ENCODE measurements at regions of chr5 and their contacts with region 1.

Region 1: GRCh38 chr5:138542956-138543729 is at the start of gene ETF1:
- DNase-seq: peak; percentile 99 to 100
- ATAC-seq: peak; percentile 86 to 97 (median 87)
- H3K4me3 ChIP-seq: peak within 1 kb of the TSS; percentile 98
- H3K4me3 Mint-ChIP-seq: peak within 1 kb of the TSS; percentile 100
- H3K27ac ChIP-seq: peak within 1 kb of the TSS; percentile 98
- H3K27ac Mint-ChIP-seq: peak within 1 kb of the TSS; percentile 98 to 100
- H3K4me1 ChIP-seq: peaks cover 32% of the 10 kb centered on the region
- H3K4me1 Mint-ChIP-seq: peaks cover 71 to 72% of the 10 kb centered on the region in 2 donors
- H3K27me3 ChIP-seq: no peaks in the 10 kb centered on the region
- H3K27me3 Mint-ChIP-seq: no peaks in the 10 kb centered on the region
- CTCF ChIP-seq: no peak
- total RNA-seq, gene ETF1: 135 to 189 (median 136) TPM

Region 2: DNA sequence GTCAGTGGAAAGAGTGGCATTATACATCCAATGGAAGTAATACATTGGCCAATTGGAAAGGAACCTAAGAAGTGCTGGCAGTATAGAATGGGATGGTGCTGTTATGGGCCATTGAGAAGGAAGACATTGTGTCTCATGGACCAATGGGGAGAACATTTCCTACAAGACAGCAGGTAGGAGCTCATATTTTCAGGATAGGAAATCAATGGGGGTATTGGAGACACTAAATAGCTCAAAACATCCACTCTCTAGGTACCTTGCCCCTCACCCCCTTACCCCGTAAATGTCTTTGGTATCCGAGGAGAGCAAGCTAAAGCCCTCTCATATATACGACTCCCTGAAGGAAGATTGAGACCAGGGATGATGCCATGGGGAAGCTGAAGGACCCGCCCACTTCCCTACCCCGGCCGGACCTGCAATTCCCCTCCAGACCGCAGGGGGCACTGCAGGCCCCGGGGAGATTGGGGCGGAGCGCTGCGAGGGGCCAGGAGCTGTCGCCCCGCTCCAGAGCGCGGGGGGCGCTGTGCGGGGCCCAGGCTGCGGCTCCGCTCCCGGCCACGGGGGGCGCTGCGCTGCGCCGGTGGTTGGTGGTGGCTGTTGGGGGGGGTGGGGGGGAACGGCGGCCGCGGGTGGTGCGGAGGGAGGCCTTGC is 190.9 kb before region 1 on chr5 and contains the start of gene KDM3B:
- intact Hi-C with region 1: loop called (anchors 2 kb)
- DNase-seq: peak; percentile 95 to 98
- ATAC-seq: peak; percentile 86 to 98 (median 87)
- H3K4me3 ChIP-seq: peak within 1 kb of the TSS; percentile 97
- H3K4me3 Mint-ChIP-seq: peak within 1 kb of the TSS; percentile 95
- H3K27ac ChIP-seq: peak within 1 kb of the TSS; percentile 97
- H3K27ac Mint-ChIP-seq: peak within 1 kb of the TSS; percentile 94 to 97
- H3K4me1 ChIP-seq: peaks cover 18% of the 10 kb centered on the region
- H3K4me1 Mint-ChIP-seq: peaks cover 44 to 45% of the 10 kb centered on the region in 2 donors
- H3K27me3 ChIP-seq: no peaks in the 10 kb centered on the region
- H3K27me3 Mint-ChIP-seq: no peaks in the 10 kb centered on the region
- CTCF ChIP-seq: peak; percentile 98
- total RNA-seq, gene KDM3B: 82.3 to 87.1 (median 82.3) TPM

Region 3: DNA sequence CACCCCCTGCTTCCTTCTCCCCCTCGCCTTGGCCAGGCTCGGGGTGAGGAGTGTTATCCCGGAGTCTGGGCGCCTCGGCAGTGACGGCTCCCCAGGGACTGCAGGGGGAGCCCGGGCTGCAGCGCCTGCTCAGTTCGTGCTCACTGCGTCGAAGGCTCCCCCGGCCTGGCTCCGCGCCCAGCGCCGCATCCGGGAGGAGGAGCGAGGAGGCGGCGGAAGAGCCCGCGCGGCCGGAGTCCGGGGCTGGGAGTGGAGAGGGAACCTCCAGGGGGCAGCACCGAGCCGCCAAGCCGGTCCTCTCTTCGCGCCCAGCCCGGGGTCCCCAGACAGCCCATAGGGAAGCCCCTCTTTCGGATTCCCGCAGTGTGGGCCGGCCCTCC is 79.1 kb before region 1 on chr5:
- intact Hi-C with region 1: loop called (anchors 1 kb)
- DNase-seq: peak; percentile 95 to 98
- ATAC-seq: peak; percentile 52 to 79 (median 57)
- H3K4me3 ChIP-seq: peak overlapping the region; percentile 83
- H3K4me3 Mint-ChIP-seq: peak overlapping the region; percentile 93
- H3K27ac ChIP-seq: peak overlapping the region; percentile 97
- H3K27ac Mint-ChIP-seq: peak overlapping the region; percentile 93 to 95
- H3K4me1 ChIP-seq: peaks cover 48% of the 10 kb centered on the region
- H3K4me1 Mint-ChIP-seq: peaks cover 30 to 53% of the 10 kb centered on the region in 2 donors
- H3K27me3 ChIP-seq: no peaks in the 10 kb centered on the region
- H3K27me3 Mint-ChIP-seq: no peaks in the 10 kb centered on the region
- CTCF ChIP-seq: peak; percentile 99

Region 4: DNA sequence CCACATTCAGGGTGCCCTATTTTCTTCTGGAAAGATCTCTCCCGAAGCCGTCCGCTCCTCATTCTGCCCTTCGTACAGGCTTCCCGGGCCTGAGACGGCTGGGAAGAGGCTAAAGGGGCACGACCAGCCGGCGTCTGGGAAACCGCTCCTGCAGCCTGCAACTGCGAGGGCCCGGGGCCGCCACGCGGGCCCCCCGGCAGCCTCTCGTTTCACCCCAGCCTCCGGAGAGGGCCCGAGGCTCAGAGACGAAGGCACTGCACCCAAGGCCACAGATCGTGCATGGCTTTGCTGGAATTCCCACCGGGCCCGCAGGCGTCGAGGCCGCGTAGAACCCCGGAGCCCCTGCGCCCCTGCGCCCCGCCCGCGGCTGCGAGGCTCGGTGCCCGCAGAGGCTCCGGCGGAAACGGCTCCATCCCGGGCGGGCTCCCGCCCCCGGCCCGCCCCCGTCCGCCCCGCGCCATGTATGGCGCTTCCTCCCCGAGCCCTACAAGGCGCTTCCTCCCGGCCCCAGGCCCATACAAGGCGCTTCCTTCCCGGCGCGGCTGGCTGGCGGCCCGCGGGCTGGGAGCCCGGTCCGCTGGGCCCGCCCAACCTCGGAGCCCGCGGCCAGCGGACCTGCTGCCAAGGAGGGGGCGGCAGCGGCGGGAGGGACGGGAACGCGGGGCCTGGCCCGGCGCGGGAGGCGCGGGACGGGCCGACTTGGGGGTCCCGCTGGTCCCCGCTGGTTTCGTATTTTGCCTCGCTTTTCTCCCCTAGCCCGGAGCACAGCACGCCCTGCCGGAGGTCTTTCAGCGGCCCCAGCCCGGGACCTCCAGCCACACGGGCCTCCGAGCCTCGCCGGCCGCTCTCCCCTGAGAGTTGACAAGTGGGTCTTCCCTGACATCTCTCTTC is 51.2 kb before region 1 on chr5:
- intact Hi-C with region 1: loop called (anchors 10 kb)
- DNase-seq: peak; percentile 75 to 94
- ATAC-seq: peak; percentile 97 to 100 (median 99)
- H3K4me3 ChIP-seq: peak overlapping the region; percentile 47
- H3K4me3 Mint-ChIP-seq: peak overlapping the region; percentile 94
- H3K27ac ChIP-seq: no peak overlapping the region
- H3K27ac Mint-ChIP-seq: peak overlapping the region; percentile 62 to 82
- H3K4me1 ChIP-seq: peaks cover 16% of the 10 kb centered on the region
- H3K4me1 Mint-ChIP-seq: peaks cover 5 to 10% of the 10 kb centered on the region in 2 donors
- H3K27me3 ChIP-seq: peaks cover 26% of the 10 kb centered on the region
- H3K27me3 Mint-ChIP-seq: peaks cover 15 to 18% of the 10 kb centered on the region in 2 donors
- CTCF ChIP-seq: no peak

Region 5: DNA sequence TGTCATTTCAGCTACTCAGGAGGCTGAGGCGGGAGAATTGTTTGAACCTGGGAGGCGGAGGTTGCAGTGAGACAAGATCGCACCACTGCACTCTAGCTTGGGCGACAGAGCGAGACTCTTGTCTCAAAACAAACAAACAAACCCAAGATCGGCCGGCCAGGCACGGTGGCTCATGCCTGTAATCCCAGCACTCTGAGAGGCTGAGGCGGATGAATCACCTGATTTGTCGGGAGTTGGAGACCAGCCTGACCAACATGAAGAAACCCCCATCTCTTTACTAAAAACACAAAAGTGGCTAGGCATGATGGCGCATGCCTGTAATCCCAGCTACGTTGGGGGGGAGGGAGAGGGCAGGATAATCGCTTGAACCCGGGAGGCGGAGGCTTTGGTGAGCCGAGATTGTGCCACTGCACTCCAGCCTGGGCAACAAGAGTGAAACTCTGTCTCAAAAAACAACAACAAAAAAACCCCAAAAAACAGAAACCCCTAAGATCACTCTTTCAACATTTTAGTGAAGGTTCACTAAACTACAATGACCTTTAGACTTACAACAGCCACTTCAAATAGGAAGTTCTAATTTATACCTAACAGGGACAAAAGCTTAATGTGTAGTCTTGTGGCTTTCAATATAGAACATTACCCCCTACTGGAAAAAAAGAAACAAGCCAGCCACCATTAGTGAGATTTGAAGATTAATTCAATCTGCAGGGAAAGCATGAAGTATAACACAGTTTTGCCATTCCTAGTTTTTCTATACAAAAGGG is 25.1 kb after region 1 on chr5:
- intact Hi-C with region 1: loop called (anchors 1 kb)
- DNase-seq: no peak
- ATAC-seq: no peak
- H3K4me3 ChIP-seq: no peak overlapping the region
- H3K4me3 Mint-ChIP-seq: peak overlapping the region; percentile 58
- H3K27ac ChIP-seq: no peak overlapping the region
- H3K27ac Mint-ChIP-seq: peak overlapping the region; percentile 87 to 92
- H3K4me1 ChIP-seq: peaks cover 46% of the 10 kb centered on the region
- H3K4me1 Mint-ChIP-seq: peaks cover 49 to 59% of the 10 kb centered on the region in 2 donors
- H3K27me3 ChIP-seq: no peaks in the 10 kb centered on the region
- H3K27me3 Mint-ChIP-seq: no peaks in the 10 kb centered on the region
- CTCF ChIP-seq: no peak

Region 6: GRCh38 chr5:138575194-138576015 is 32.3 kb after region 1 on chr5 and contains the start of gene HSPA9:
- intact Hi-C with region 1: loop called (anchors 1 kb)
- DNase-seq: peak; percentile 95 to 100
- ATAC-seq: peak; percentile 79 to 92 (median 85)
- H3K4me3 ChIP-seq: peak within 1 kb of the TSS; percentile 86
- H3K4me3 Mint-ChIP-seq: peak within 1 kb of the TSS; percentile 98
- H3K27ac ChIP-seq: peak within 1 kb of the TSS; percentile 98
- H3K27ac Mint-ChIP-seq: peak within 1 kb of the TSS; percentile 100
- H3K4me1 ChIP-seq: peaks cover 18% of the 10 kb centered on the region
- H3K4me1 Mint-ChIP-seq: peaks cover 21 to 33% of the 10 kb centered on the region in 2 donors
- H3K27me3 ChIP-seq: no peaks in the 10 kb centered on the region
- H3K27me3 Mint-ChIP-seq: no peaks in the 10 kb centered on the region
- CTCF ChIP-seq: no peak
- total RNA-seq, gene HSPA9: 272 to 308 (median 308) TPM